ENCODE measurements at regions of chr17 and their contacts with region 1.

Region 1: GRCh38 chr17:77957857-77958715 is at the start of gene TNRC6C:
- DNase-seq: peak; percentile 98 to 100 (median 100)
- ATAC-seq: peak; percentile 96
- H3K4me3 ChIP-seq: peak within 1 kb of the TSS; percentile 79
- H3K4me3 Mint-ChIP-seq: peak within 1 kb of the TSS; percentile 93 to 100 (median 96)
- H3K27ac ChIP-seq: peak within 1 kb of the TSS; percentile 82
- H3K27ac Mint-ChIP-seq: peak within 1 kb of the TSS; percentile 82 to 98 (median 95)
- H3K4me1 ChIP-seq: peaks cover 26 to 35% of the 10 kb centered on the region in 2 donors
- H3K4me1 Mint-ChIP-seq: peaks cover 26 to 43% (median 36%) of the 10 kb centered on the region in 7 donors
- H3K27me3 ChIP-seq: no peaks in the 10 kb centered on the region
- H3K27me3 Mint-ChIP-seq: peaks cover 0 to 46% (median 0%) of the 10 kb centered on the region in 5 donors
- total RNA-seq, gene TNRC6C: 28.6 to 133 (median 104) TPM

Region 2: DNA sequence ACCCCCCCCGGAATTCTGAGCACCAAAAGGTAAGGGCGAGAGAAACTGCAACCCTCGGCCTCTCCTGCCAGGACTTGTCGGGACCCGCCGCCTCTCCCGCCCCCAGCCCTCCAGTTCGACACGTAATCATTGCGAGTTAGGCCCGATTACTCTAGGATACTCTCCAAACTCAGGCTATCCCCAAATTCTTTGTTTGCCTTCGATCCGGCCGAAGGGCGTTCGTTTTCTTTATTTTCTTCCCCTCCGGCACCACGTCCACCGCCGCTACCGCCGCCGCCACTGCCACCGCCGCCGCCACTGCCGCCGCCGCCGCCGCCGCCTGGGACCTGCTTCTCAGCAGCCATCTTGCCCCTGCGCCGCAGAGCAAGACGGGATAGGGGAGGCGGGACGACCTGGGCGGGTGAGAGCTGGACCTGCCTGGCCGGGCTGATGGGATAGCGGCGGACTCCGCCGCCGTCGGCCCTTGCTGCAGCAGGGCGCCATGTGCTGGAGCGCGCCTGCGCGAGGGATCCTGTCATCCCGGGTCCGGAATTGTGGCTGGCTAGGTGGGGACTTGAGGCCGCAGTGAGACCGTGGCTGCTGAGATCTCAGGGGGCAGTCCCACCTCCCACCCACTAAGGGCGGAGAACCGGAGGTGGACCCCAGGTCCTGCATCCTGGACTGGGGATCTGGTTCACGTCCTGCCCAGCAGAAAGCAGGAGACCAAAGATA is 1885.8 kb before region 1 on chr17 and contains the start of gene SRP68:
- CTCF ChIA-PET with region 1: no interaction called
- POLR2A ChIA-PET with region 1: no interaction called
- intact Hi-C with region 1: loop called in 1 of 2 experiments (anchors 10 kb)
- DNase-seq: peak; percentile 63 to 86 (median 74)
- ATAC-seq: peak; percentile 92
- H3K4me3 ChIP-seq: peak within 1 kb of the TSS; percentile 89
- H3K4me3 Mint-ChIP-seq: peak within 1 kb of the TSS; percentile 85 to 98 (median 97)
- H3K27ac ChIP-seq: peak within 1 kb of the TSS; percentile 93
- H3K27ac Mint-ChIP-seq: peak within 1 kb of the TSS; percentile 90 to 98 (median 95)
- H3K4me1 ChIP-seq: peaks cover 10 to 37% of the 10 kb centered on the region in 2 donors
- H3K4me1 Mint-ChIP-seq: peaks cover 21 to 62% (median 52%) of the 10 kb centered on the region in 7 donors
- H3K27me3 ChIP-seq: peaks cover 13 to 14% of the 10 kb centered on the region in 2 donors
- H3K27me3 Mint-ChIP-seq: peaks cover 17 to 37% (median 24%) of the 10 kb centered on the region in 5 donors
- total RNA-seq, gene SRP68: 70.8 to 105 (median 91.9) TPM

Region 3: DNA sequence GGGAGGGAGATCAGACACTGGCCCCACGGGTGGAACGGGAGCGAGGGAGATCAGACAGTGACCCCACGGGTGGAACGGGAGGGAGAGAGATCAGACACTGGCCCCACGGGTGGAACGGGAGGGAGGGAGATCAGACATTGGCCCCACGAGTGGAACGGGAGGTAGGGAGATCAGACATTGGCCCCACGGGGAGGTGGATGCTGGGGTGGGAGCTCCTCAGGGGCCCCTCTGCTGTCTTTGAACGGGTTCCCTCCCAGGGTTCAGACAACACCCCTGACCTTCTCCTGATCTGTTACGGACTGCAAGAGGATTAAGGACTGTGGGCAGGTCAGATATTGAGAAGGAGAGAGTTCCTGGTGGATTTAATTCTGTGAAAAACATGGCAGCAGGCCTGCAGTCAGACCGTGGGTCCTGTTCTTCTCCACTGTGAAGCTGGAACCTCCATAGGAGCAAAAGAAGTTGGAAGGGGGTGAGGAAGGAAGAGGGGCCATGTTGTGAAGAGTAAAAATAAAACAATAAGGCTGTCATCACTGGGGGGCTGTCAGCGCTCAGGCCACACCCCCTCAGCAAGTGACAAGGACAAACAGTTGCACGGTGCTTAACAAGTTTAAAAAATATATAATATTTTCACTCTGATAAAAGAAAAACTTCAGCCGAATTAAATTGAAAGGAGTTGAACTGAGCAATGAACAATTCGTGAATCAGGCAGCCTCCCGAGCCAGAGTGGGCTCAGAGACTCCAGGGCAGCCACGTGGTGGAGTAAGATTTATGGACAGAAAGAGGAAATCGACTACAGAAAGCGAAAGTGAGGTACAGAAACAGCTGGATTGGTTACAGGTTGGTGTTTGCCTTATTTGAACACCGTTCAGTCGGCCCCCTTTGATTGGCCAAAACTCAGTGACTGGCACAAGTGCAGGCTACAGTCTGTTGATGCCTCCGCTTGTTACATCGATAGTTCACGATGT is 348.3 kb before region 1 on chr17:
- CTCF ChIA-PET with region 1: no interaction called
- POLR2A ChIA-PET with region 1: interaction called, 19 read pairs
- intact Hi-C with region 1: loop called in 1 of 2 experiments (anchors 1 kb)
- DNase-seq: peak in 8 of 9 donors; percentile 30 to 86 (median 81)
- ATAC-seq: peak; percentile 95
- H3K4me3 ChIP-seq: peak overlapping the region; percentile 54
- H3K4me3 Mint-ChIP-seq: peak overlapping the region; percentile 75 to 92 (median 84)
- H3K27ac ChIP-seq: peak overlapping the region; percentile 77
- H3K27ac Mint-ChIP-seq: peak overlapping the region; percentile 87 to 98 (median 92)
- H3K4me1 ChIP-seq: peaks cover 11 to 21% of the 10 kb centered on the region in 2 donors
- H3K4me1 Mint-ChIP-seq: peaks cover 21 to 35% (median 31%) of the 10 kb centered on the region in 7 donors
- H3K27me3 ChIP-seq: no peaks in the 10 kb centered on the region
- H3K27me3 Mint-ChIP-seq: peaks cover 0 to 9% (median 0%) of the 10 kb centered on the region in 5 donors

Region 4: GRCh38 chr17:77700165-77700881 is 257.8 kb before region 1 on chr17:
- CTCF ChIA-PET with region 1: no interaction called
- POLR2A ChIA-PET with region 1: no interaction called
- intact Hi-C with region 1: no loop called
- DNase-seq: no peak
- ATAC-seq: no peak
- H3K4me3 ChIP-seq: no peak overlapping the region
- H3K4me3 Mint-ChIP-seq: no peak overlapping the region
- H3K27ac ChIP-seq: no peak overlapping the region
- H3K27ac Mint-ChIP-seq: no peak overlapping the region
- H3K4me1 ChIP-seq: no peaks in the 10 kb centered on the region
- H3K4me1 Mint-ChIP-seq: peaks cover 4 to 27% (median 18%) of the 10 kb centered on the region in 7 donors
- H3K27me3 ChIP-seq: no peaks in the 10 kb centered on the region
- H3K27me3 Mint-ChIP-seq: peaks cover 0 to 22% (median 0%) of the 10 kb centered on the region in 5 donors

Region 5: DNA sequence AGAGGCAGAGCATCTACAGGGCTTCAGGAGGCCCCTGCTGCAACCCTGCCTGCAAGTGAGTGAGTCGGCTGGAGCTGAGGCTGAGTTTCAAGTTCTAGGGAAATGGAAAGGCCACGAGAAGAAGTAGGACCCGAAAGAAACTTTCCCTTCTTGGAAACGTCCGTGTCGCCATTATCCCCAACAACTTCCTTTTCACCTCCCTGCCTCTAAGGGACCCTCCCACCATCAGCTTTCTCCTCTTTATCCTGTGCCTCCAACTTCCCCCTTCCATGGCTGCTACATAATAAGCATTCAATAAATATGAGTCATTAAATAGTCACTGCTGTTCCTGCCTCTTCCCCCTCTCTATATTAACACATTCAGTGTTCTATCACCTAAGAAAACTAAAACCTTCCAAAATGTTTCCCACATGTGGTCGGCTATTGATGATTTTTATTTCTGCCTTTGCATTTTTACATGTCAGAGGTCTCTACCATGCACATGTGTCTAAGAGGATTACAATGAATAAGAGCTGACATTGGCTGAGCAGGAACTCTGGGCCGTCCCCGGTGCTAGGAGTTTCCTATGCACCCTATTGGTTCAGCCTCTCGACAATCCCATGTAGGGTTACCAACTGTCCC is 115.4 kb before region 1 on chr17:
- CTCF ChIA-PET with region 1: no interaction called
- POLR2A ChIA-PET with region 1: interaction called, 18 read pairs
- intact Hi-C with region 1: loop called (anchors 1 kb)
- DNase-seq: no peak
- ATAC-seq: peak; percentile 52
- H3K4me3 ChIP-seq: no peak overlapping the region
- H3K4me3 Mint-ChIP-seq: peak overlapping the region in 6 of 10 donors; percentile 0 to 63 (median 44)
- H3K27ac ChIP-seq: no peak overlapping the region
- H3K27ac Mint-ChIP-seq: peak overlapping the region in 6 of 9 donors; percentile 0 to 90 (median 10)
- H3K4me1 ChIP-seq: peaks cover 38 to 44% of the 10 kb centered on the region in 2 donors
- H3K4me1 Mint-ChIP-seq: peaks cover 28 to 61% (median 51%) of the 10 kb centered on the region in 7 donors
- H3K27me3 ChIP-seq: no peaks in the 10 kb centered on the region
- H3K27me3 Mint-ChIP-seq: peaks cover 0 to 2% (median 0%) of the 10 kb centered on the region in 5 donors

Region 6: GRCh38 chr17:77887464-77888241 is 70.4 kb before region 1 on chr17:
- CTCF ChIA-PET with region 1: no interaction called
- POLR2A ChIA-PET with region 1: interaction called, 141 read pairs
- intact Hi-C with region 1: loop called (anchors 1 kb)
- DNase-seq: peak; percentile 55 to 92 (median 84)
- ATAC-seq: peak; percentile 95
- H3K4me3 ChIP-seq: peak overlapping the region; percentile 80
- H3K4me3 Mint-ChIP-seq: peak overlapping the region; percentile 84 to 97 (median 92)
- H3K27ac ChIP-seq: peak overlapping the region; percentile 92
- H3K27ac Mint-ChIP-seq: peak overlapping the region; percentile 65 to 99 (median 98)
- H3K4me1 ChIP-seq: peaks cover 31 to 37% of the 10 kb centered on the region in 2 donors
- H3K4me1 Mint-ChIP-seq: peaks cover 20 to 62% (median 52%) of the 10 kb centered on the region in 7 donors
- H3K27me3 ChIP-seq: no peaks in the 10 kb centered on the region
- H3K27me3 Mint-ChIP-seq: peaks cover 0 to 58% (median 0%) of the 10 kb centered on the region in 5 donors

Region 7: GRCh38 chr17:78013683-78014467 is 55.8 kb after region 1 on chr17:
- CTCF ChIA-PET with region 1: interaction called, 11 read pairs
- POLR2A ChIA-PET with region 1: interaction called, 75 read pairs
- intact Hi-C with region 1: loop called (anchors 1 to 2 kb)
- DNase-seq: peak in 7 of 9 donors; percentile 39 to 68 (median 61)
- ATAC-seq: peak; percentile 77
- H3K4me3 ChIP-seq: no peak overlapping the region
- H3K4me3 Mint-ChIP-seq: no peak overlapping the region
- H3K27ac ChIP-seq: no peak overlapping the region
- H3K27ac Mint-ChIP-seq: peak overlapping the region in 5 of 9 donors; percentile 3 to 64 (median 18)
- H3K4me1 ChIP-seq: peaks cover 0 to 3% of the 10 kb centered on the region in 2 donors
- H3K4me1 Mint-ChIP-seq: peaks cover 18 to 58% (median 43%) of the 10 kb centered on the region in 7 donors
- H3K27me3 ChIP-seq: no peaks in the 10 kb centered on the region
- H3K27me3 Mint-ChIP-seq: no peaks in the 10 kb centered on the region

Region 8: GRCh38 chr17:78360371-78361224 is 402.5 kb after region 1 on chr17:
- CTCF ChIA-PET with region 1: no interaction called
- POLR2A ChIA-PET with region 1: no interaction called
- intact Hi-C with region 1: loop called in 1 of 2 experiments (anchors 5 kb)
- DNase-seq: peak; percentile 73 to 98 (median 83)
- ATAC-seq: peak; percentile 42
- H3K4me3 ChIP-seq: peak overlapping the region; percentile 47
- H3K4me3 Mint-ChIP-seq: peak overlapping the region; percentile 83 to 93 (median 88)
- H3K27ac ChIP-seq: peak overlapping the region; percentile 99
- H3K27ac Mint-ChIP-seq: peak overlapping the region; percentile 54 to 97 (median 93)
- H3K4me1 ChIP-seq: peaks cover 25 to 28% of the 10 kb centered on the region in 2 donors
- H3K4me1 Mint-ChIP-seq: peaks cover 13 to 46% (median 27%) of the 10 kb centered on the region in 7 donors
- H3K27me3 ChIP-seq: no peaks in the 10 kb centered on the region
- H3K27me3 Mint-ChIP-seq: peaks cover 0 to 2% (median 0%) of the 10 kb centered on the region in 5 donors

Measured in naive thymus-derived CD4-positive, alpha-beta T cell (primary cell).